ENCODE measurements at regions of chr5 and their contacts with region 1.

Region 1: GRCh38 chr5:122182491-122182921 is 53.2 kb downstream of the ZNF474 start:
- DNase-seq: peak; percentile 96
- H3K4me3 Mint-ChIP-seq: peak overlapping the region; percentile 62
- H3K27ac Mint-ChIP-seq: peak overlapping the region; percentile 85
- H3K4me1 Mint-ChIP-seq: peaks cover 43% of the 10 kb centered on the region
- H3K27me3 Mint-ChIP-seq: no peaks in the 10 kb centered on the region
- CTCF ChIP-seq: no peak

Region 2: GRCh38 chr5:121968910-121969607 is 213.4 kb before region 1 on chr5:
- CTCF ChIA-PET with region 1: interaction called, 4 read pairs
- POLR2A ChIA-PET with region 1: interaction called, 13 read pairs
- intact Hi-C with region 1: loop called (anchors 5 kb)
- DNase-seq: peak; percentile 99
- H3K4me3 Mint-ChIP-seq: peak overlapping the region; percentile 38
- H3K27ac Mint-ChIP-seq: peak overlapping the region; percentile 80
- H3K4me1 Mint-ChIP-seq: peaks cover 15% of the 10 kb centered on the region
- H3K27me3 Mint-ChIP-seq: no peaks in the 10 kb centered on the region
- CTCF ChIP-seq: no peak

Region 3: GRCh38 chr5:122101636-122102285 is 80.7 kb before region 1 on chr5:
- CTCF ChIA-PET with region 1: interaction called, 7 read pairs
- POLR2A ChIA-PET with region 1: interaction called, 17 read pairs
- intact Hi-C with region 1: no loop called
- DNase-seq: peak; percentile 76
- H3K4me3 Mint-ChIP-seq: no peak overlapping the region
- H3K27ac Mint-ChIP-seq: peak overlapping the region; percentile 35
- H3K4me1 Mint-ChIP-seq: peaks cover 19% of the 10 kb centered on the region
- H3K27me3 Mint-ChIP-seq: no peaks in the 10 kb centered on the region
- CTCF ChIP-seq: peak; percentile 67

Region 4: DNA sequence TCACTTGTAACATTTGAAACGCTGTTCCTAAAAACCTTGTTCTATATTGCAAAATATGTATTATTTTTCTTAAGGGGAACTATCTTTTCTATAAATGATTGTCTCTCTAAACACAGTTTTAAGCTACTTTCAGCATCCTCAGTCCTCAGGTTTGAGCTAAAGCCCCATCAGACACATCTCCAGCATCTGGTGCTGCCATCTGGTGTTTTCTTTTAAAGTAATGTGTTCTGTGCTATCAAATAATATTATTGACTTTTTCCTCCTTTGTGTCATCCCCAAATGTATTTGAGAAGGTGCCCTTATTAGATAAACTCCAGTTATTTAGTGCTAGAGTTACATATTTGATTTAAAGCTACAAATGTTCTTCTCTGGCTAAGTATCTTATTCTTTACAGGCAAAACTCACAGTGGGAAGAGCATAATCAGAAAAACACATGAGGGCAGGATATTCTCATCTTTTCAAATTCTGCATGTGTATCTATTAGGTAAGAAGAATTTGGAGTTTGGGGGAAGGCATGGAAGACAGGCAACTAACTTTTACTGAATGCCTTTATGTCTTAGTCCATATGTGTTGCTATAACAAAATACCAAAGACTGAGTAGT is 25.7 kb before region 1 on chr5:
- CTCF ChIA-PET with region 1: interaction called, 24 read pairs
- POLR2A ChIA-PET with region 1: interaction called, 19 read pairs
- intact Hi-C with region 1: no loop called
- DNase-seq: peak; percentile 73
- H3K4me3 Mint-ChIP-seq: no peak overlapping the region
- H3K27ac Mint-ChIP-seq: no peak overlapping the region
- H3K4me1 Mint-ChIP-seq: peaks cover 12% of the 10 kb centered on the region
- H3K27me3 Mint-ChIP-seq: no peaks in the 10 kb centered on the region
- CTCF ChIP-seq: peak; percentile 70

Region 5: DNA sequence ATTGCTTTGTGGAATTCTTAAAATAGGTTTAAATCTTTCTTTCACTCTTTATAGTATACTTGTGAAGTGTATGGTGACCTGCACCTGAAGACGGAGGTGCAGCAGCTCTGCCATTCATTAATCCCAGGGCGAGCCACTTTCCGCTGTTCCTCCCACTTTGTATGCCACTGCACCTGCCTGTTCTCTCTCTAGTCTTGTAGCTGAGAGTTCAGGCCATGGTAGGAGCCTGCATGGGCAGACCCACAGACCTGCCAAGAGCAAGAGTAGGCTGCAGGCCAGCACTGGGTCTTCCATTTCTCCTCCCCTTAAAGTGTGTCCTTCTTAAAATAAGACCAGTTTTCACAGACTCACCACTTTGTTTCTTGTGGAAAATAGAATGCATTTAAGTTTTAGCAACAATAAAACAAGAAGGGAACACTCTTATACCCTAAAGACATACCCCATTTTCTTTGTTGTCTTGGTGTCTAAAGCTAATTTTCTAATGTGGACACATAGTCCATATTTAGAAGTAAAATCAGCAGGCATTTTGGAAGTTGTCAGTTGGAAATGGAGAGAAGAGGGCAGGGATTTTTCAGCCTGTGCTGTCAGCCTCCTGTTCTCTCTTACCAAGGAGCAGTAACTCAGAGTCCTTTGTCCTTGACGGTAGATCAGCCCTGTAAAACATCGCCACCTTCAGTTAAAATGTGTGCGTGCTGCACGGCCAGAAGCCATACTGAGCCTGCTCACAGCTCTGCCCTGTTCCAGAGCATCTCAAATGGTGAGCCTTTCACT is 232.7 kb after region 1 on chr5:
- CTCF ChIA-PET with region 1: interaction called, 18 read pairs
- POLR2A ChIA-PET with region 1: interaction called, 3 read pairs
- intact Hi-C with region 1: no loop called
- DNase-seq: peak; percentile 86
- H3K4me3 Mint-ChIP-seq: no peak overlapping the region
- H3K27ac Mint-ChIP-seq: no peak overlapping the region
- H3K4me1 Mint-ChIP-seq: peaks cover 6% of the 10 kb centered on the region
- H3K27me3 Mint-ChIP-seq: peaks cover 17% of the 10 kb centered on the region
- CTCF ChIP-seq: peak; percentile 87

Region 6: DNA sequence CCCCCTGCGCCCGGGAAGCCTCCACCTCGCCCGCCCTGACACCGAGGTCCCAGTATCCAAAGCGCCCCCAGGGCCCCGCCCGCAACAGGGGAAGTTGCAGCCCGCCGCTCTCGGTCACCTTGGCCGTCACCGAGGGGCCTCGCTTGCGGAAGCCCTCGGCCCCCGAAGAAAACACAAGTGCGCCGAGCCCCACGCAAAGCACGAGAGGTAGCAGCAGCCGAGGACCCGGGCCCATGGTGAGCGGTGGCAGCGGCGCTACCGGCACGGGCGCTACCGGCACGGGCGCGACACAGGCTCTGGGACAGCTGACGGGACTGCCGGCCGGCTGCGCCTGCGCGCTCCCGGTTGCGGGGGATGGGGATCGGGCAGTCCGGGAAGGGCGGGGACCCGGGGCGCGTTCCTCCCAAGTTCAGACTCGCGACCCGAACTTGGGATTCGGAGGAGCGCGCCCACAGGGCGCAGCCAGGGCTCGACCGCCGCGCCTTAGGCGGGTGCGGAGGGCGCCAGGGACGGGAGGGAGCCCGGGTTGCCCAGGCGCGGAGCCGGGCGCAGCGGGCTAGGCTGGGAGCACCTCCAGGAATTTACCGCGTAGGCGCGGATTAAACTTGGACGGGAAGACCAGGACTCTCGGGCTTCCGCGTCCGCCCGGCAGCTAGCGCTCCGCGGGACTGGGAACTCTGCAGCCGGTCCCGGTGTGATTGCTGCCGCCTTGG is 854.0 kb after region 1 on chr5 and contains the start of gene PPIC:
- CTCF ChIA-PET with region 1: no interaction called
- POLR2A ChIA-PET with region 1: no interaction called
- intact Hi-C with region 1: loop called (anchors 5 kb)
- DNase-seq: peak; percentile 88
- H3K4me3 Mint-ChIP-seq: peak within 1 kb of the TSS; percentile 80
- H3K27ac Mint-ChIP-seq: peak within 1 kb of the TSS; percentile 86
- H3K4me1 Mint-ChIP-seq: peaks cover 38% of the 10 kb centered on the region
- H3K27me3 Mint-ChIP-seq: no peaks in the 10 kb centered on the region
- CTCF ChIP-seq: no peak
- total RNA-seq, gene PPIC: 45.3 and 65.0 TPM in 2 replicates